Activated naive CD4-positive, alpha-beta T cell treated with anti-CD3 and anti-CD28 coated beads, Interleukin-2, amount 10 ng/mL, durations not matched to agents 7 days and 5 days (primary cell): ENCODE measurements at regions of chr5 and their contacts with region 1.

Region 1: GRCh38 chr5:99032234-99033013 is 103.6 kb upstream of the CHD1 start:
- DNase-seq: peak; percentile 47
- H3K4me3 Mint-ChIP-seq: peak overlapping the region; percentile 70
- H3K27ac Mint-ChIP-seq: peak overlapping the region; percentile 93
- H3K4me1 Mint-ChIP-seq: peaks cover 78% of the 10 kb centered on the region
- H3K27me3 Mint-ChIP-seq: peaks cover under 1% of the 10 kb centered on the region

Region 2: DNA sequence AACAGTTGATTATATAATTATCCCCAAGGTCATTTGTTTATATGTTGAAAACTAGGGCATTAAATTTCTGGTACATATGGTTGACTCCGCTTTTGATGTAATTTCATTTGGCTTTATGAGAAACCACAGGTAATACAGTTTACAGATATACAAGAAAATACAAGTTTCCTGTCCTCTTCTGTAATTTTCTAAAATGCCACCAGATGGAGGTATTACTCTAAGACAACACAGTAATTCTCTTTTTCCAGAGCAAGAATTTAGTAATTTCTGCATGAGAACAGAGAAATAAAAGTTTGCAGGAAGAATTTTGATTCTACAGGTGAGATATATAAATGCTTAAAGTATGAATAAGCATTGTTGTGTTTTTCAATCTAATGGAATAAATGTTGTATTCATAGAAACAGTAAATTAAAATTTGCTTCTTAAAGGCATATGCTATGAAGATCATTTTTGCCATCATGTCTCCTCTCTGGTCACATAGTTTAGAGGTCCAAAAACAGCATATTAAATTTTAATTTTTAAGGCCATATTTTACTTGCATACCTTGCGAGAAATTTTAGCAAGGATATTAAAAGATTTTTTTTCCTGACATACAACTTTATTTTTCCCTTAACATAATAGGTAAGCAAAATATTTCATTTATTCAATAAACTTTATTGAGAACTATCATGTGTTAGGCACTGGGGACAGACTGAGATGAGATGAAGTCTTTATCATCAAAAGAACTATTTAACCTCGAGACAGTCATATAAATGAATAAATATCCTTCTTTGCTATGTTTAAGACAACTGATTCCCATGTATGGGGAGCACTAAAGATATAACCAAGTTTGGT is 126.3 kb before region 1 on chr5:
- CTCF ChIA-PET with region 1: interaction called, 22 read pairs
- DNase-seq: no peak
- H3K4me3 Mint-ChIP-seq: no peak overlapping the region
- H3K27ac Mint-ChIP-seq: no peak overlapping the region
- H3K4me1 Mint-ChIP-seq: peaks cover 18% of the 10 kb centered on the region
- H3K27me3 Mint-ChIP-seq: no peaks in the 10 kb centered on the region

Region 3: DNA sequence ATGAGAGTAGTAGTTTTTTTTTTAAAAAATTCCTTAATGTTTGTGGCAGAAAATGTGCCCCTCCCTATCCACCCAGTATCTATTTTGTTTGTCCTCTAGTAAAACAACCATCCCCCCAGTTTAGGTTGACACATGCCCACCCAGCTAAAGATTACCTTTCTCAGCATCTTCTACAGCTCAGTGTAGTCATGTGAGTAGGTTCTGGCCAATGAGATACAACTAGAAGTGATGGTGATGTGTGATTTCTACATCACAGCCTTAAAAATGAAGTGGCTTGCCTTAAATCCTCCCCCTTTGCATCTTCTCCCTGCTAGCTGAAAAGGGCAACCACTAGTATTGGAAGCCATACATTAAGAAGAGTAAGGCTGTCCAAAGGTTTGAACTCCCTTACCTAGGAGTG is 118.5 kb before region 1 on chr5:
- CTCF ChIA-PET with region 1: interaction called, 19 read pairs
- DNase-seq: no peak
- H3K4me3 Mint-ChIP-seq: no peak overlapping the region
- H3K27ac Mint-ChIP-seq: peak overlapping the region; percentile 1
- H3K4me1 Mint-ChIP-seq: peaks cover 38% of the 10 kb centered on the region
- H3K27me3 Mint-ChIP-seq: no peaks in the 10 kb centered on the region

Region 4: DNA sequence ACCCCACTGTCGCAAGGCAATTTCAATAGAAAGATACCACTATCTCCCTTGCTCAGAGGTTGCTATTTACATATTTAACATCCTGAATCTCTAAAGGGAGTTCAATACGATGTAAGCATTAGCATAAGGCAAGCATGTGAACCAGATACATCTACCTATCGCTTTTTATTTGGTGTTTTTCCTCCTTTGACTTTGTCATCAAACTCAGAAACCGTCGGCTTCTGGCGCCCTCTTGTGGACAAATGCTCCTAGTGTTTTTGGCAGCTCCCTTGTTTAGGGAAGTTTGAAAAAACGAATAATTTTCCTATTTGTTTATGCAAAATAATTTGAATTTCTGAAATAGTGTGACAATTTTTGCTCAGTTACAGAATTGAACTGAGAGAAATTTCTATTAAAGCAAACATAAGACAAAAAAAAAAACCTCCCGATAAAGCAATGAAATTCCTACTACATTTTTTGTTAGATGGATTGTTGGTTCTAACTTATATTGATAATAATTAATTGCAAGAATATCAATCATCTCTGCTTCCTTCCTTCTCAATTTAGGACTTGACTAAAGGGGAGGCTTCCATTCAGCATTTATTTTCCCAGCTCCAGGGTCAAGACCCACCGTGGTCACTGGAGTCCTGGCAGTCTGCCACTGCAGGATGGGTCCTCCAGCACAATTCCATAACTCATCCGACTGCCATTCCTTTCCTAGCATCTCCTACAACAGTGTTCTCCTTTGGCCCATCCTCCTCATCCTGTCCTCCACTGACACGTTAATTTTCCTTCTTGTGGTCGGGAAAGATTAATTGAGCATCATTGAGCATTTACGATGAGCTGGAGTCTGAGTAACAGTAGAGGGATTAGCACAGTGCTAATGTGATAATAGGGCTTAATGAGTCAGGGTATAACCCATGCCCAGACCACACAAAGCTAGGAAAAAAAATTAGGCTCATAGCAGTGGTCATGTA is 28.2 kb after region 1 on chr5:
- CTCF ChIA-PET with region 1: interaction called, 10 read pairs
- DNase-seq: peak; percentile 90
- H3K4me3 Mint-ChIP-seq: no peak overlapping the region
- H3K27ac Mint-ChIP-seq: no peak overlapping the region
- H3K4me1 Mint-ChIP-seq: peaks cover 4% of the 10 kb centered on the region
- H3K27me3 Mint-ChIP-seq: peaks cover 17% of the 10 kb centered on the region